ENCODE measurements at regions of chr22 and their contacts with region 1.

Region 1: DNA sequence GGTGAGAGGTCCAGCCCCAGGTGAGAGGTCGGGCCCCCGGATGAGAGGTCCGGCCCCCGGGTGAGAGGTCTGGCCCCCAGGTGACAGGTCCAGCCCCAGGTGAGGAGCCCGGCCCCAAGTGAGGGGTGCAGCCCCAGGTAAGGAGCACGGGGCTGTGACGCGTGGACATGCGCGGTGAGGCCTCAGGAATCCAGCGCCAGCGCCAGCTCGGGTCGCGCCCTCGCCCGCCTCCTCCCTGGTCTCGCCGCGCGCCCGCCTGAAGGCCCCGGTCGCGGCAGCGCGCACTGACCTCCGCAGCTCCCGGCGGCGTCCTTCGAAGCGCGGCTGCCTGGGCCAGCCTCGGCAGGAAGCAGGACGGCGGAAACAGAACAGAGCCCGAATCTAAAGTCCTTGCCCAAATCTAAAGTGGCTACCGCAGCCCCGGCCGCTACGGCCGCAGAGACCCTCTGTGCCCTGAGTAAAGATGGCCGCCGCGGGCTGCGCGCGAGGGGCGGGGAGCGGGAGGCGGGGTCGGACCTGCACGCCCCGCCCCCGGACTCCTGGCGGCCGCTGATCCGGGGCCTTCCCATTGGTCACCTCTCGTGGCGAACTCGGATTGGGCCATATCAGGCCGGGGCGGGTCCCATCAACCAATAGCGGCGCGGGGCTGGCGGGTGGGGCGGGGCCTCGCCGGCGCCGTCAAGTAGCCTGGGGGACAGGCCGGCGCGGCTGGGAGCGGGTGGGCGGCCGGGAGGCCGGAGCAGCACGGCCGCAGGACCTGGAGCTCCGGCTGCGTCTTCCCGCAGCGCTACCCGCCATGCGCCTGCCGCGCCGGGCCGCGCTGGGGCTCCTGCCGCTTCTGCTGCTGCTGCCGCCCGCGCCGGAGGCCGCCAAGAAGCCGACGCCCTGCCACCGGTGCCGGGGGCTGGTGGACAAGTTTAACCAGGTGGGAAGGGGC is at the starts of genes ALG12 and CRELD2:
- DNase-seq: peak; percentile 96
- H3K4me3 Mint-ChIP-seq: peak within 1 kb of the TSS; percentile 89
- H3K27ac Mint-ChIP-seq: peak within 1 kb of the TSS; percentile 87
- H3K4me1 Mint-ChIP-seq: peaks cover 16% of the 10 kb centered on the region
- H3K27me3 Mint-ChIP-seq: no peaks in the 10 kb centered on the region
- total RNA-seq, gene ALG12: 13.1 and 18.5 TPM in 2 replicates
- total RNA-seq, gene CRELD2: 48.1 and 51.0 TPM in 2 replicates

Region 2: DNA sequence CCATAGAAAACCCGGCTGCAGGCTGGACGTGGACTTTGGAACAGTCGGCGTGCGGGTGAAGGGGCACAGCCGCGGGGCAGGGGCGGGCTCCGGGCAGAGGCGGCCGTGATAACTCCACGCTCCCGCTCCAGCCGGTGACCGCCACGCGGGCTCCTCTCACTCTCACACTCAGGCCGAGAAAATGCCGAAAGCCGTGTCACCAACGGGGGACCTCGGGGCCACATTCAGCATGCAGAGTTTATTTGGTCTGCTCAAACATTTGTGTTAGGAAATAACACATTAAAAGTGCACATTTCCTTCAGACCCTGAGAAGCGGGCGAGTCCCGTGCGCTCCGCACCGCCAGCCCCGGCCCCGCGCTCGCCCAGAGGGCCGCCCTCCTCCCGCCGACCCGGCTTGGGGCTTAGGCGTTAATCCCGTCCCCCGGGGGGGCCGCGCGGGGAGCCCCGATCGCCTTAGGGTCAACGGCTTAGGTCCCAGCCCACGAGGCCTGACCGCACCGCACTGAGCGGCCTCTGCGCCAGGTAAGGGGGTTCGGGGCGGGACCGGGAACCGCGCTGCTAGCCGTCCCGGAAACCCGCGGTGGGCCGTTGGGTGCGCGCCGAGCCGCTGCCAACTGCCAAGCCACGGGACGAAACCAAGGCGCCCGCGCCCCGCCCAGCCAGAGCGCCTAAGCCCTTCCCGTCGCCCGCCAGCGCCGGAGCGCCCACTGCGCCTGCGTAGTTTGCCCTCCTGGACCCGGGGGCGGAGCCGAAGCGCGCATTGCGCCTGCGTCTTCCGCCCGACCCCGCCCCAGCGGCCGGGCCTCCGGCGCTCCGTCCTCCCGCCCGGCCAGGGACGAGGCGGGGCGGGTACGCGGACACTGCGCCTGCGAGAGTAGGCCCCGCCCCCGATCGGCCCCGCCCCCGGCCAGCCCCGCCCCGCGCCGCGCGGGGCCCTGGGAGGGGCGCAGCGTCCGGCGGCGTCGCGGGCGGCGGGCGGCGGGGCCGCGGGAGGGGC is 65.0 kb before region 1 on chr22 and contains the start of gene ZBED4:
- intact Hi-C with region 1: loop called (anchors 1 kb)
- DNase-seq: peak; percentile 99
- H3K4me3 Mint-ChIP-seq: peak within 1 kb of the TSS; percentile 98
- H3K27ac Mint-ChIP-seq: peak within 1 kb of the TSS; percentile 97
- H3K4me1 Mint-ChIP-seq: peaks cover 32% of the 10 kb centered on the region
- H3K27me3 Mint-ChIP-seq: peaks cover 10% of the 10 kb centered on the region
- total RNA-seq, gene ZBED4: 19.4 and 20.9 TPM in 2 replicates

Region 3: GRCh38 chr22:50200461-50201190 is 282.4 kb after region 1 on chr22 and contains the start of gene SELENOO:
- intact Hi-C with region 1: loop called (anchors 5 kb)
- DNase-seq: peak; percentile 90
- H3K4me3 Mint-ChIP-seq: peak within 1 kb of the TSS; percentile 88
- H3K27ac Mint-ChIP-seq: peak within 1 kb of the TSS; percentile 63
- H3K4me1 Mint-ChIP-seq: peaks cover 19% of the 10 kb centered on the region
- H3K27me3 Mint-ChIP-seq: no peaks in the 10 kb centered on the region
- total RNA-seq, gene SELENOO: 23.7 and 25.9 TPM in 2 replicates